Activated CD8-positive, alpha-beta T cell treated with anti-CD3 and anti-CD28 coated beads for 36 hours (primary cell): ENCODE measurements at regions of chr15 and their contacts with region 1.

Region 1: DNA sequence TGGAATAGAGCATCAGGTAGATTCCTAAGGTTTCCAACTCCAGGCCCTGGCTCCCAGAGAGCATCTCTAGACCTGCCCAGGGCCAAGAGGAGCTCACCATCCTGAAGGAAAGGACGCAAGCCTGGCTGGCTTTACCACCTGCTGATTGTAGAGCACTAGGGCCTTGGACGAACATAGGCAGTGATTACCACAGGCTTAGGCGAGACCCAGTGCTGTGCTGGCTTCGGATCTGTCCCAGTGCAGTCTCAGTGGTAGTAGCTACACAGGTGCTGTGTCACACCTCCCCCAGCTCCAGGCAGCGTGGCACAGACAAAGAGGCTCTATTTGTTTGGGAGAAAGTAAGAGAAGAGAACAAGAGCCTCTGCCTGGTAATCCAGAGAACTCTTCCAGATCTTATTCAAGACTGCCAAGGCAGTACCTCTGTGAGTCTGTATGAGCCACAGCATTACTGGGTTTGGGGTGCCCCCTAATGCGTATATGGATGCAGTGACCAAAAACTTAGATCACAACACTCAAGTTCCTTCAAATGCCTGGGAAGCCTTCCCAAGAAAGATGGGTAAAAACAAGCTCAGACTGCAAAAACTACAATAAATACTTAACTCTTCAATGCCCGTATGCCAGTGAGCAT is 25.4 kb downstream of the ISG20 start:
- DNase-seq: peak; percentile 75
- ATAC-seq: peak; percentile 88
- H3K4me3 Mint-ChIP-seq: no peak overlapping the region
- H3K27ac Mint-ChIP-seq: peak overlapping the region; percentile 7
- H3K4me1 Mint-ChIP-seq: peaks cover 28% of the 10 kb centered on the region
- H3K27me3 Mint-ChIP-seq: peaks cover 3% of the 10 kb centered on the region
- CTCF ChIP-seq: peak; percentile 55

Region 2: DNA sequence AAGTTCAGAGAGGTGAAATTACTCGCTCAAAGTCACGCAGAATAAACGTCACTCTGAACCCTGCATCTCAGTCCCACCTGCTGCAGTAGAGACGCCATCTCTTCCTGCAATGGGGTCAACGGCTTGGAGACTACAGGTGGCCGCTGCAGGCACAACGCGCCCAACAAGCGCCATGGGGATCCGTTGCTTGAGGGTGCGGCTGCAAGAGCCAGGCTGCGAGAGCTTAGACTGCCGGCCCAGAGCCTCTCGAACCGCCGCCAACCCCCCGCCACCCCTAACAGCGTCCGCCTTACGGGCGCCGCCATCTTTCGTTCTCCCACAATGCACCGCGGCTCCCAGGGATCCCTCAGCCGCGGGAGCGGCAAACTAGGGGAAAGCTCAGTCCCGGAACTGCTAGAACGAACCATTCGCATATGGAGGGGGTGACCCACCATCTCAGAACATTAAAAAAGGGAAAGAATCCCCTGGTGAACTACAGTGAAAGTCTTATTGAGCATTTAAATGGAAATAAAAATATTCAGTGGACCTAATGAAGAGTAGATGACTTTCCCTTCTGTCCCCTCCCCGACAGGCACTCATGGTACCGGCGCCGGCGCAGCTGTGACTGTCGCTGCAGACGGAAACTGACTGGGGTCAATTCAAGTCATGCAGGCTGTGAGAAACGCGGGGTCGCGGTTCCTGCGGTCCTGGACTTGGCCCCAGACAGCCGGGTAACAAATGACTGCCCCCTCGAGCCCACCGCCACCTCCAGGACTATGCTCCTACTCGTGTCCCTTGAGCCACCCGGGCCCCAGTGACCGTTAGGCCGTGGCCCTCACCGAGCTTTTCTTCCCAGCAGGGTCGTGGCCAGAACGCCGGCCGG is 197.0 kb before region 1 on chr15 and contains the starts of genes MRPL46 and MRPS11:
- CTCF ChIA-PET with region 1: interaction called, 10 read pairs
- POLR2A ChIA-PET with region 1: interaction called, 3 read pairs
- intact Hi-C with region 1: no loop called
- DNase-seq: peak; percentile 92
- ATAC-seq: peak; percentile 90
- H3K4me3 Mint-ChIP-seq: peak within 1 kb of the TSS; percentile 90
- H3K27ac Mint-ChIP-seq: peak within 1 kb of the TSS; percentile 99
- H3K4me1 Mint-ChIP-seq: peaks cover 34% of the 10 kb centered on the region
- H3K27me3 Mint-ChIP-seq: no peaks in the 10 kb centered on the region
- CTCF ChIP-seq: no peak
- total RNA-seq, gene MRPL46: 34.4 to 35.0 TPM
- total RNA-seq, gene MRPS11: 54.3 to 55.4 TPM

Region 3: GRCh38 chr15:88574655-88575054 is 89.6 kb before region 1 on chr15:
- CTCF ChIA-PET with region 1: no interaction called
- POLR2A ChIA-PET with region 1: no interaction called
- intact Hi-C with region 1: no loop called
- DNase-seq: no peak
- ATAC-seq: no peak
- H3K4me3 Mint-ChIP-seq: no peak overlapping the region
- H3K27ac Mint-ChIP-seq: no peak overlapping the region
- H3K4me1 Mint-ChIP-seq: no peaks in the 10 kb centered on the region
- H3K27me3 Mint-ChIP-seq: peaks cover 2% of the 10 kb centered on the region
- CTCF ChIP-seq: no peak

Region 4: DNA sequence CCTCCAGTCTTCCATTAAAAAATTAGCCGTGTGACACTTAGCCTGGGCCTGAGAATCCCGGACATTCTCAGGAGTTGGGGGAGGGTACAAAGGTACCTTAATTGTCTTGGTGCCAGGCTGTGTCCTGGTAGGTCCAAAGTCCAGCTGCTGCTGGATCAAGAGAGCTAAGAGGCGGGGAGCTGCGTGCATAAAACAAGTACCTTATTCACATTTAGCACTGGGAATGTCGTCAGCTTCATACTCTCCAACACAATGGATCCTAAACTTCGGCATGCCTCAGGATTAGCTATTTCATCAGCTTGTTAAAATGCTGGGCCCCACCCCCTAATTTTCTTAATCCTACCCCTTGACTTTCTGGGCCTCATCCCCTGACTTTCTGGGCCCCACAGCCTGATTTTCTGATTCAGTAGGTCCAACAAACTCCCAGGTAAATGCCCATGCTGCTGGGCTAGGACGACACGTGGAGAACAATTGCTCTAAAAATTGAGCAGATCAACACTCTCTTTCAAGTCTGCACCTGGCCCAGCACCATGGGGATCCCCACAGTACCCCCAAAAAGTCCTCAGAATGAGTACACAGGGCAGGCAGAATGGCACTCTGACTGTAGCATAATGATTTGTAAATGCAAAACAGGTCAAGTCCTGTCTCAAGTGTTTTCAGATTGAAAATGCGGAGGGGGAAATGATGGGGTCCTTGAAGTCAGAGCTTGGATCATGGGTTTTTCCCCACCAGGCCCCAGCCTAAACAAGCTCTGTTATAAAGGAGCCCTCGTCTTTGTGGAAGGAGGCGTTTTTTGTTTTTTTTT is 48.8 kb before region 1 on chr15:
- CTCF ChIA-PET with region 1: interaction called, 10 read pairs
- POLR2A ChIA-PET with region 1: no interaction called
- intact Hi-C with region 1: loop called (anchors 5 kb)
- DNase-seq: no peak
- ATAC-seq: no peak
- H3K4me3 Mint-ChIP-seq: no peak overlapping the region
- H3K27ac Mint-ChIP-seq: no peak overlapping the region
- H3K4me1 Mint-ChIP-seq: peaks cover under 1% of the 10 kb centered on the region
- H3K27me3 Mint-ChIP-seq: peaks cover 18% of the 10 kb centered on the region
- CTCF ChIP-seq: no peak

Region 5: DNA sequence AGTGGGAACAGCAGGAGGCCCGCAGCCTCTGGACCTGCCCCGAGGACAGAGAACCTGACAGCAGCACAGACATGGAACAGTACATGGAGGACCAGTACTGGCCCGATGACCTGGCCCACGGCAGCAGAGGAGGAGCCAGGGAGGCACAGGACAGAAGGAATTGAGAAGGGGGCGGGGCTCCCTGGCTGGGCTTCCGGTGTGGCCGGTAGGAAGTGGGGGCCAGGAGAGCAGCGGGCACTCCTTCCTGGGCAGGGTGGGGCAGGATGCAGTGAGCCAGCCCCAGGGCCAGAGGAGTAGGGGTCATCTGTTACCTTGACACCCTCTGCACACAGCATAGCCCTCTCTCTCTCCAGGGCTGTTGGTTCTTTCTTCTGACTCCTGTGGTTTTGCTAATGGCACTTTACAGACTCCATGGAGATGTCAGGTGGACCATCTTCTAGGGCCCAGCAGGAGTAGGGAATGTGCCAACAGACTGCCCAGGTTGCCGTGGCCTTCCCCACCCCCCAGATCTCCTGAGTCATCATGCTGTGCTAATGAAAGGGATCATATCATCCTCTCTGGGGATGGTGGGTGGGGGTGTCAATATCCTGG is 34.0 kb before region 1 on chr15:
- CTCF ChIA-PET with region 1: interaction called, 42 read pairs
- POLR2A ChIA-PET with region 1: interaction called, 4 read pairs
- intact Hi-C with region 1: no loop called
- DNase-seq: no peak
- ATAC-seq: no peak
- H3K4me3 Mint-ChIP-seq: no peak overlapping the region
- H3K27ac Mint-ChIP-seq: peak overlapping the region; percentile 85
- H3K4me1 Mint-ChIP-seq: peaks cover 87% of the 10 kb centered on the region
- H3K27me3 Mint-ChIP-seq: no peaks in the 10 kb centered on the region
- CTCF ChIP-seq: no peak

Region 6: GRCh38 chr15:88649286-88649733 is 15.0 kb before region 1 on chr15:
- CTCF ChIA-PET with region 1: interaction called, 11 read pairs
- POLR2A ChIA-PET with region 1: interaction called, 5 read pairs
- intact Hi-C with region 1: no loop called
- DNase-seq: peak; percentile 95
- ATAC-seq: peak; percentile 86
- H3K4me3 Mint-ChIP-seq: peak overlapping the region; percentile 73
- H3K27ac Mint-ChIP-seq: peak overlapping the region; percentile 98
- H3K4me1 Mint-ChIP-seq: peaks cover 74% of the 10 kb centered on the region
- H3K27me3 Mint-ChIP-seq: no peaks in the 10 kb centered on the region
- CTCF ChIP-seq: no peak

Region 7: DNA sequence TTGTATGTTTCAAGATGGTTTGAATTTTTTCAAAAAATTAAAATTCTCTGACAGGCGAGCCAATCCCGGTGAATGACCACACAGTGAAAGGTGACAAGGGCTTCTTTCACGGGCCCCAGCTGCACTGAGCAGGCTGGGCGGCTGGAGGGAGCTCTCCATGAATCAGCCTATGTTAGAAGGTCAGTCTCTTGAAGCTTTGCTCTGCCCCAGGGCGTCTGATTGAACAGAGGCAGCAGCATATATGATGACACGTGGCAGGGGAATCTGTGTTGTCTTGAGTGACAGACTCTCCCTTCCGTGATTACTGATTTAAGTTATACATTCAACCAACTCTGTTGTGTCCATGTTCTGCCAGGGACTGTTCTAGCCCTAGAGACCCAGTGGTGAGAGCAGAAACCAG is 26.1 kb after region 1 on chr15:
- CTCF ChIA-PET with region 1: no interaction called
- POLR2A ChIA-PET with region 1: no interaction called
- intact Hi-C with region 1: no loop called
- DNase-seq: no peak
- ATAC-seq: no peak
- H3K4me3 Mint-ChIP-seq: no peak overlapping the region
- H3K27ac Mint-ChIP-seq: no peak overlapping the region
- H3K4me1 Mint-ChIP-seq: no peaks in the 10 kb centered on the region
- H3K27me3 Mint-ChIP-seq: peaks cover 2% of the 10 kb centered on the region
- CTCF ChIP-seq: no peak